H1 (cell line): ENCODE measurements at regions of chr14 and their contacts with region 1.

Region 1: DNA sequence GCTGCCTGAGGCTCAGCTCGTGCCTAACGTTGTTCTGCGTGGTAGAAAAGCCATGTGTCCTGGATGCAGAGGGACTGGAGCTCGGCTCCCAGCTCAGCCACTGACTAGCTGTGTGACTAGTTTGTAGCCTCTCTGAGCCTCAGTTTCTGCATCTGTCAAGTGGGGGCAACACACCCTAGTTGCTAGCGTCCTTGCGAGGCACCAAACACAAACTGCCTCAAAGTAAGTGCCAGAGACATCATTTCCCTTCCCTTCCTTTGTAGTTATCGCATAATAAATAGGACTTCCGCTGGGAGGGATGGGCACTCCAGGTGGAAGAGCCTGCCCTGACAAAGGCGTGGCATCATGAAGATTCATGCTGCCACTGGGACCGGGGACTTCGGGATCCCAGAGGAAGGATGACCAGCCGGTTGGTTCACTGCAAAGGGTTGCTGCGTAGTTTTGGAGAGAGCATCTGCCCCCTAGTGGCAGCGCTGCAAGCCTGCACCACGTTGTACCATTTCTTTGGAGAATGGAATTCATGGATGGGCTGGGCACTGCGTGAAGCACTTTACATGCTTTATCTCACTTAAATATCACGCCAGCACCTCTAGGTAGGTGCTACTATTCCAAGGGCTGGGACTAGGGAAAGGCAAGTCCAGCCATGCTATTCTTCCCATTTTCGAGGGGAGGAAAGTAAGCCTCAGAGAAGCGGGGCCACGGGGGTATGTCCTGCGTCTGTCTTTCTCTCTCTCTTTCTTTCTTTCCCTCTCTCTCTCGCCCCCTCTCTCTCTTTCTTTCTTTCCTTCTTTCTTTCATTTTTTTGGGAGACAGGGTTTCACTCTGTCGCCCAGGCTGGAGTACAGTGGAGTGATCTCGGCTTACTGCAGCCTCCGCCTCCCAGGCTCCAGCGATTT is 4.6 kb downstream of the CCDC197 start:
- DNase-seq: peak; percentile 36 to 73
- H3K4me3 ChIP-seq: no peak overlapping the region
- H3K27ac ChIP-seq: no peak overlapping the region
- H3K4me1 ChIP-seq: peaks cover 0 to 3% (median 0%) of the 10 kb centered on the region in 4 experiments; a peak in 2 of 7 replicates
- H3K27me3 ChIP-seq: 0 out of 7 replicates have a peak, but pooled peaks cover 0 to 2% (median 0%) of the 10 kb centered on the region in 4 experiments
- CTCF ChIP-seq: peak; percentile 93 to 99 (median 97)
- EP300 ChIP-seq: no peak
- POLR2A ChIP-seq: no peak
- RAD21 ChIP-seq: peak; percentile 89 to 90

Region 2: GRCh38 chr14:93970549-93970946 is 31.2 kb before region 1 on chr14:
- CTCF ChIA-PET with region 1: interaction called, 28 read pairs
- POLR2A ChIA-PET with region 1: no interaction called
- DNase-seq: no peak
- H3K4me3 ChIP-seq: no peak overlapping the region
- H3K27ac ChIP-seq: no peak overlapping the region
- H3K4me1 ChIP-seq: peaks cover 0 to 1% (median 0%) of the 10 kb centered on the region in 4 experiments; a peak in 1 of 7 replicates
- H3K27me3 ChIP-seq: no peaks in the 10 kb centered on the region
- CTCF ChIP-seq: peak; percentile 59 to 70 (median 61)
- EP300 ChIP-seq: no peak
- POLR2A ChIP-seq: no peak
- RAD21 ChIP-seq: peak; percentile 53 to 71

Region 3: DNA sequence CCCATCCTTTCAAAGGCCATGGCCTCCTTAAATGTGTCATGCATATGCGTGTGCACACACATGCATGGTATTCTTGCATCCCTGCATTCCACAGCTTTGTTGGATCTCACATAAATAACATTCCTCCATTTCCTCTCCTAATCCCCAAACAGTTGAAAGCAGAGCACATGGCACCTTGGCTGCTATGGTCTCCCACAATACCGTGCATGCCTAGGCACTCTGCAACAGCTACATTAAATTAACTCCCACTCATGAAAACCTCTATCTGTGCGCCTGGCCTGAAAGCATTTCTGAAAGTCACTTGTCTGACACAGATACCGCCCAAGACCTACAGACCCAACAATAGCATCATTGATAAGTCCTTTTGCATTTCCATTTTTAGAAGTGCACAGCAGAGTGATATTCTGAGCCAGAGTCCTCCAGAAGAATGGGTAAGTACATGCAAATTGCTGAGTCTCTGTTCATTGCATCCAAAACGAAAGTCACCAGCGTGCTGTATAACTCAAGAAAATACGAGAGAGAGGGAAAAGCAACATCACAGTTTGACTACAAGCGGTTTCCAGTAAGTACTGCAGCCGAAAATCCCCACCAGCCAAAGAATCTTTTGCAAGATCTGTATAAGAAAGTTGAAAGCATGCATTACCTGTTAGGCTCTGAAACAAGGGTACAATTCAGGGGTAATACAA is 25.8 kb before region 1 on chr14:
- CTCF ChIA-PET with region 1: interaction called, 108 read pairs
- POLR2A ChIA-PET with region 1: no interaction called
- DNase-seq: no peak
- H3K4me3 ChIP-seq: no peak overlapping the region
- H3K27ac ChIP-seq: no peak overlapping the region; the same call in 1 of the 2 replicates
- H3K4me1 ChIP-seq: peaks cover 0 to 3% (median 0%) of the 10 kb centered on the region in 4 experiments; a peak in 1 of 7 replicates
- H3K27me3 ChIP-seq: no peaks in the 10 kb centered on the region; a peak in 1 of 7 replicates
- CTCF ChIP-seq: no peak
- EP300 ChIP-seq: no peak
- POLR2A ChIP-seq: no peak
- RAD21 ChIP-seq: no peak

Region 4: GRCh38 chr14:93984987-93985410 is 16.8 kb before region 1 on chr14:
- CTCF ChIA-PET with region 1: interaction called, 108 read pairs
- POLR2A ChIA-PET with region 1: interaction called, 3 read pairs
- DNase-seq: peak in 1 of 2 experiments; percentile 65
- H3K4me3 ChIP-seq: no peak overlapping the region
- H3K27ac ChIP-seq: no peak overlapping the region
- H3K4me1 ChIP-seq: peaks cover 0 to 14% (median 8%) of the 10 kb centered on the region in 4 experiments; a peak in 4 of 7 replicates
- H3K27me3 ChIP-seq: no peaks in the 10 kb centered on the region; a peak in 1 of 7 replicates
- CTCF ChIP-seq: peak; percentile 50 to 64 (median 62)
- EP300 ChIP-seq: no peak
- POLR2A ChIP-seq: no peak
- RAD21 ChIP-seq: peak; percentile 11 to 50; a peak in 2 of 4 replicates

Region 5: GRCh38 chr14:94011795-94012194 is 10.0 kb after region 1 on chr14:
- CTCF ChIA-PET with region 1: interaction called, 65 read pairs
- POLR2A ChIA-PET with region 1: no interaction called
- DNase-seq: no peak
- H3K4me3 ChIP-seq: no peak overlapping the region
- H3K27ac ChIP-seq: no peak overlapping the region
- H3K4me1 ChIP-seq: no peaks in the 10 kb centered on the region; a peak in 1 of 7 replicates
- H3K27me3 ChIP-seq: peaks cover 0 to 2% (median 0%) of the 10 kb centered on the region in 4 experiments; a peak in 1 of 7 replicates
- CTCF ChIP-seq: no peak
- EP300 ChIP-seq: no peak
- POLR2A ChIP-seq: no peak
- RAD21 ChIP-seq: no peak

Region 6: GRCh38 chr14:94021001-94021400 is 19.3 kb after region 1 on chr14:
- CTCF ChIA-PET with region 1: interaction called, 65 read pairs
- POLR2A ChIA-PET with region 1: no interaction called
- DNase-seq: no peak
- H3K4me3 ChIP-seq: no peak overlapping the region
- H3K27ac ChIP-seq: no peak overlapping the region
- H3K4me1 ChIP-seq: peaks cover 0 to 18% (median 10%) of the 10 kb centered on the region in 4 experiments; a peak in 4 of 7 replicates
- H3K27me3 ChIP-seq: no peaks in the 10 kb centered on the region; a peak in 1 of 7 replicates
- CTCF ChIP-seq: no peak
- EP300 ChIP-seq: no peak
- POLR2A ChIP-seq: no peak
- RAD21 ChIP-seq: no peak